ENCODE measurements at regions of chr4 and their contacts with region 1.

Region 1: GRCh38 chr4:142353149-142353738 is 492.9 kb downstream of the INPP4B start:
- DNase-seq: no peak
- ATAC-seq: peak; percentile 71; the same call in 1 of the 2 replicates
- H3K4me3 ChIP-seq: no peak overlapping the region
- H3K27ac ChIP-seq: peak overlapping the region; percentile 69
- H3K4me1 ChIP-seq: peaks cover 11% of the 10 kb centered on the region; the same call in 1 of the 2 replicates
- H3K27me3 ChIP-seq: no peaks in the 10 kb centered on the region
- CTCF ChIP-seq: peak; percentile 75; the same call in 1 of the 2 replicates

Region 2: DNA sequence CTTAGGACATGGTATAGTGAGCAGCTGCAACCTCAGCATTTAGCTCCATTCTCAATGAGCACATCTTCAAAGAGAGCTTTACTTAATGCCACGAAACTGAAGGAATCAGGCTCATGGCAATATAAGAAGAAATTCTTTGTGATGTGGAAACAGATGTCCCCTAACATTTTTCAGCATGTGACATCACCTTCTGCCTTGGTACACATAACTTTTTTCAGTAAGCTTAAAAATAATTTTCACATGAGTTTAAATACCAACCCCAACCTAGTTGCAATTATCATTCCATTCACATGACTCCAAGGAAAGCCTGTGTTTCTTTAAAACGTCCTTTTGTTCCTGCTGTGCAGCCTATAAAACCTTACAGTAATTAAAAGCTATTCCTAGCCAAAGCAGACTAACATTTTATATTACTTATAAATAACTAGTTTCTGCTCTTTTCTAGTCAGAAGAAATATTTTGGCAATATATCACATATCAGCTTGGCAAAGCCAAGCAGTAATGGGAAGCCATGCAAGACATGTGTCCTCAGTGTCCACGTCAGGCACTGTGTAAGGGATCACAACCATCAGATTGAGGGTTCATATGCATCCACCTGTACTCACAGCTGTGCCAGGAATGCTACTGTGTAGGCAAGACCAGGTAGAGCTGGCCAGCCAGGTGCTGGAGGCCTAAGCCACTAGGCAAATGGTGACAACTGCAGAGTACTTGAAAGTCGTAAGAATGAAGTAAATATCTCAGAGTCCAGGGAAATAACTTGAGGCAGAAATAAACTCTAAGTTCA is 26.2 kb after region 1 on chr4:
- CTCF ChIA-PET with region 1: no interaction called
- POLR2A ChIA-PET with region 1: interaction called, 10 read pairs
- in situ Hi-C with region 1: no loop called
- intact Hi-C with region 1: no loop called
- DNase-seq: no peak
- ATAC-seq: peak; percentile 89
- H3K4me3 ChIP-seq: no peak overlapping the region
- H3K27ac ChIP-seq: peak overlapping the region; percentile 59
- H3K4me1 ChIP-seq: peaks cover 8% of the 10 kb centered on the region; the same call in 1 of the 2 replicates
- H3K27me3 ChIP-seq: no peaks in the 10 kb centered on the region
- CTCF ChIP-seq: no peak

Region 3: DNA sequence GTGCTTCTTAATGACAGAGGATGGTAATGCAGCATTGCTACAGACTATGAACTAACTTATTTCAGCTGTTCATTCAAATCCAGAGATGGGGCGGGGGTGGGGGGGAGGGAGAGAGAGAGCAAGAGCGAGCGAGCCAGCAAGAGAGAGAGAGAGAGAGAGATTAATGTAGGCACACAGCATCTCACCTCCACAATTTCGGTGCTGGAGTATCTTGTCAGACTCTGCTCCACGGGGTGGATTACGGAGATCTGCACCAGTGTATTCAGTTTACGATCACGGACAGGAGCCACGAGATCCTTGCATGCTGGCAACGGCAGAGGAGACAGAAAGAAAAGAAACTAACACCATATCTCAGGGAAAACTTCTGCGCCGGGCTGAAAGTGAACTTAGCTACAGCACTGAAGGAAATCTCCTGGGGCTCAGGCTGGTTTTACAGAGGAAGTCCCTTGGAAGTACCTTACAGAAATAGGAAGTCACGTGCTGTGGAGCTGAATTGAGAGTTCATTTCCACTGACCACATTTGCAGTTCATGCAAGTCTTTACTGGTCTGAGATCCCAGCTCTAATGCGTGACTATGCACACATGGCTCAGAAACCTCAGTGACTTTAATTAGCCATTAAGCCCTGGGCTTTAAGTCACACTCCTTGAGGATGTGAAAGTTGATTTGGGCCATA is 51.9 kb after region 1 on chr4:
- CTCF ChIA-PET with region 1: interaction called, 13 read pairs
- POLR2A ChIA-PET with region 1: no interaction called
- in situ Hi-C with region 1: no loop called
- intact Hi-C with region 1: no loop called
- DNase-seq: no peak
- ATAC-seq: peak; percentile 70
- H3K4me3 ChIP-seq: peak overlapping the region; percentile 43 to 70
- H3K27ac ChIP-seq: peak overlapping the region; percentile 92
- H3K4me1 ChIP-seq: peaks cover 25% of the 10 kb centered on the region
- H3K27me3 ChIP-seq: no peaks in the 10 kb centered on the region
- CTCF ChIP-seq: no peak

Region 4: DNA sequence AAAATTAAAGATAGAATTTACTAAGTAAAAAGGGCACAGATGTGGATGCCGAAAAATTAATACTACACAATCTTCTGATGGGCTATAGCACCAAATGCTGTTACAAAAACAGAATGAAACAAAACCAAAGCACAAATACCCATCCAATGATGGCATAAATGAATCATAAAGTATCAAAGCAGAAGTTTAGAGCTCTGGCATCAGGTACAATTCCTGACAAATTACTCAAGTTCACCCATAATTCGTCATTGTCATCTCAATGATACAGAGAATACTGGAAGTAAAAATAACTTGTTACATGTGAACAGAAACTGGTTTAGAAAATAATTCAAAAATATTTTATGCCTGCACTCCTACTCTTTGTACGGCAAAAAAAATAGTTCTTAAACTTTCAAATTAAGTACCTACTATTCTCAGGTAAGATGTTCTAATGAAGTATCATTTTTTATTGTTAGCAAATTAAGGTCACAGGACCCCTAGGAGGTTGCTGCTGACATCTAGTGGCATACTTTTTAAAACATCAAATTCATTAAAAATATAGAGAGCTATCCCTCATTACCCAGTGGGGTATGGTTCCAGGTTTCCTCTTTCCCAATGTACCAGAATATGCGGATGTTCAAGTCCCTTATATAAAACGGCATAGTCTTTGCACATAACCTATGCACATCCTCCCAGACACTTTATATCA is 366.8 kb after region 1 on chr4:
- CTCF ChIA-PET with region 1: no interaction called
- POLR2A ChIA-PET with region 1: no interaction called
- in situ Hi-C with region 1: no loop called
- intact Hi-C with region 1: loop called (anchors 5 kb)
- DNase-seq: no peak
- ATAC-seq: no peak
- H3K4me3 ChIP-seq: no peak overlapping the region
- H3K27ac ChIP-seq: no peak overlapping the region
- H3K4me1 ChIP-seq: no peaks in the 10 kb centered on the region
- H3K27me3 ChIP-seq: no peaks in the 10 kb centered on the region
- CTCF ChIP-seq: peak; percentile 53; the same call in 1 of the 2 replicates

Region 5: DNA sequence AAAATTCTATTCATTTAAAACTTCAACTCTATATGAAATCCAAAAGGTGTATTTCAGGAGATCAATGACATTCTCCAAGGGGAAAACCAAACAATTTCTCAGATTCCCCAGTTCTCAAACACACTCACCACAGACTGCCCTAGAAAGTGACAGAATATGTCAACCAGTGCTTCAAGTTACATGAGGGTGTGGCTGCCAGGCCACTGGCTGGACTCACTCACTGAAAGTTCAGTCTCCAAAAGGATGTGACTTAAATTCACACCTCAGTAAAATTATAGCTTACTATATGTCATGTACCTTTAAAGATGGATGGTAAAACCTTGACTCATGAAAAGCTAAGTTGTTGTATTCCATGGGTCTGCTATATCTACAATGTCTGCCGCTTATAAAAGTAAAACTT is 485.5 kb after region 1 on chr4:
- CTCF ChIA-PET with region 1: no interaction called
- POLR2A ChIA-PET with region 1: no interaction called
- in situ Hi-C with region 1: no loop called
- intact Hi-C with region 1: loop called (anchors 5 kb)
- DNase-seq: no peak
- ATAC-seq: no peak
- H3K4me3 ChIP-seq: no peak overlapping the region
- H3K27ac ChIP-seq: no peak overlapping the region
- H3K4me1 ChIP-seq: no peaks in the 10 kb centered on the region
- H3K27me3 ChIP-seq: no peaks in the 10 kb centered on the region
- CTCF ChIP-seq: no peak

Measured in Panc1 (cell line).